HEK293 (cell line): ENCODE measurements at regions of chr22 and their contacts with region 1.

Region 1: GRCh38 chr22:24938741-24939341 is 7.7 kb downstream of the LHFPL7 start:
- H3K4me3 ChIP-seq: no peak overlapping the region
- H3K27ac ChIP-seq: no peak overlapping the region
- H3K4me1 ChIP-seq: no peaks in the 10 kb centered on the region
- CTCF ChIP-seq: peak; percentile 39; the same call in 1 of the 2 replicates

Region 2: GRCh38 chr22:24768537-24769374 is 170.1 kb before region 1 on chr22:
- CTCF ChIA-PET with region 1: interaction called, 35 read pairs
- POLR2A ChIA-PET with region 1: no interaction called
- H3K4me3 ChIP-seq: no peak overlapping the region
- H3K27ac ChIP-seq: no peak overlapping the region
- H3K4me1 ChIP-seq: no peaks in the 10 kb centered on the region
- CTCF ChIP-seq: no peak

Region 3: DNA sequence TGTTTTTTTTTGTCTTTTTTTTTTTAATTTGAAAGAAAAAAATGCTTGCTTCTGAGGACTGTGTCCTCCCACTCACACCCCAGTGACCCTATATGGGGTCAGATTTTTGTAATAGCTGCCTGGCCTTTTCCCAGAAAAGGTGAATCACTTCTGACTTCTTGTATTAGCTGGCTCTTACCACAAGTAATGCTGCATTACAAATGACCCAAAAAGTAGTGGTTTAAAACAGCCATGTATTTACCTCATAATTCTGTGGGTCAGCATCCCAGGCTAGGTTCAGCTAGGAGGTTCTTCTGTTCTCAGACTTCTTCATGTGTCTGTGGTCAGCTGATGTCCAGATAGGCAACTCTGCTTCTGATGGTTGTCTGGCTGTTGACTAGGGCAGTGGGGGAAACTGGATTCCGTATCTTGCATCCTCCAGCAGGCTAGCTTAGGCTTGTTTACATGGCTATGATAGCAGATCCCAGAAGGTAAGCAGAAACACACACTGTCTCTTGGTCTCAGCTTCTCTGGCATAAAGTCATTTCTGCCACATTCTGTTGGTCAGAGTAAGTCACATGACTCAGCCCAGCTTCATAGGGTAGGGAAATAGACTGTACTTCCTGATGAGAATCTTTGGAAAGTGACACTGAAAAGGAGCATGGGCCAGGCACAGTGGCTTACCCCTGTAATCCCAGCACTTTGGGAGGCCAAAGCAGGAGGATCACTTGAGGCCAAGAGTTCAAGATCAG is 11.8 kb before region 1 on chr22:
- CTCF ChIA-PET with region 1: interaction called, 13 read pairs
- POLR2A ChIA-PET with region 1: no interaction called
- H3K4me3 ChIP-seq: no peak overlapping the region
- H3K27ac ChIP-seq: no peak overlapping the region
- H3K4me1 ChIP-seq: no peaks in the 10 kb centered on the region
- CTCF ChIP-seq: no peak

Region 4: GRCh38 chr22:24996420-24996952 is 57.6 kb after region 1 on chr22:
- CTCF ChIA-PET with region 1: interaction called, 10 read pairs
- POLR2A ChIA-PET with region 1: no interaction called
- H3K4me3 ChIP-seq: no peak overlapping the region
- H3K27ac ChIP-seq: peak overlapping the region; percentile 1; the same call in 1 of the 2 replicates
- H3K4me1 ChIP-seq: peaks cover 13% of the 10 kb centered on the region
- CTCF ChIP-seq: no peak

Region 5: DNA sequence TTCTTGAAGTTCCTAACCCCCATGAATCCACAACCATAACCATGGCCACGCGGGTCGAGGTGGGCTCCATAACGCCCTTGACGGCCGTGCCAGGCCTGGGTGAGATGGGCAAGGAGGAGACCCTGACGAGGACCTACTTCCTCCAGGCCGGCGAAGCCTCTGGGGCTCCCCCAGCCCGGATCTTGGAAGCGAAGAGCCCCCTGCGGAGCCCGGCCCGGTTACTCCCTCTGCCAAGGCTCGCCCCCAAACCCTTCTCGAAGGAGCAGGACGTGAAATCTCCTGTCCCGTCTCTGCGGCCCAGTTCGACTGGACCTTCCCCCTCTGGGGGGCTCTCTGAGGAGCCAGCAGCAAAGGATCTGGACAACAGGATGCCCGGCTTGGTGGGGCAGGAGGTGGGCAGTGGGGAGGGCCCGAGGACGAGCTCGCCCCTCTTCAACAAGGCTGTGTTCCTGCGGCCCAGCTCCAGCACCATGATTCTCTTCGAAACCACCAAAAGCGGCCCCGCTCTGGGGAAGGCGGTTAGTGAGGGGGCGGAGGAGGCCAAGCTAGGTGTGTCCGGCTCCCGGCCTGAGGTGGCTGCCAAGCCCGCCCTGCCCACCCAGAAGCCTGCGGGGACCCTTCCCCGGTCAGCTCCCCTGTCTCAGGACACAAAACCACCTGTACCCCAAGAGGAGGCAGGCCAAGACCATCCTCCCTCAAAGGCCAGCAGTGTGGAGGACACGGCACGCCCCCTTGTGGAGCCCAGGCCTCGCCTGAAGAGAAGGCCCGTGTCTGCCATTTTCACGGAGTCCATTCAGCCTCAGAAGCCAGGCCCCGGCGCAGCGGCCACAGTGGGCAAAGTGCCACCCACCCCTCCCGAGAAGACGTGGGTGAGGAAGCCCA is 89.4 kb after region 1 on chr22:
- CTCF ChIA-PET with region 1: interaction called, 25 read pairs
- POLR2A ChIA-PET with region 1: no interaction called
- H3K4me3 ChIP-seq: no peak overlapping the region
- H3K27ac ChIP-seq: no peak overlapping the region
- H3K4me1 ChIP-seq: peaks cover 2% of the 10 kb centered on the region
- CTCF ChIP-seq: peak; percentile 48

Region 6: DNA sequence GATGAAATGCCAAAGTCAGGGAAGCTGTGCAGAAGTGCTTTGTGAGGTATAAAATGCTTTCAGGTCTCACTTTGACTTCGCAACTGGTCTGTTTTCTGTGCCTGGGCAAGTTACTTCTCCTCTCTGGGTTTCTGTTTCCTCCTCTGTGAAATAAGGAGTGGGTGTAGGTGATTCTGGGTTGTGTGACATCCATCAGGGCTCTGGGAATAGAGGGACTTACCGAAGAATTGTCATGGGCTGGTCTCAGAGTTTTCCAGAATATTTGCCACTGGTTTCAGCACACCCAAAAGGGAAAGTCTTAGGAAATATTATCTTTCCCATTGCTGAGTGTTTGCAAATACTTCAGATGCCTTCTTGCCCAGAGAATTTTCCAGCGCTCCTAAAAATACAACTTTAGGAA is 132.1 kb after region 1 on chr22:
- CTCF ChIA-PET with region 1: interaction called, 10 read pairs
- POLR2A ChIA-PET with region 1: no interaction called
- H3K4me3 ChIP-seq: no peak overlapping the region
- H3K27ac ChIP-seq: no peak overlapping the region
- H3K4me1 ChIP-seq: no peaks in the 10 kb centered on the region
- CTCF ChIP-seq: no peak

Region 7: DNA sequence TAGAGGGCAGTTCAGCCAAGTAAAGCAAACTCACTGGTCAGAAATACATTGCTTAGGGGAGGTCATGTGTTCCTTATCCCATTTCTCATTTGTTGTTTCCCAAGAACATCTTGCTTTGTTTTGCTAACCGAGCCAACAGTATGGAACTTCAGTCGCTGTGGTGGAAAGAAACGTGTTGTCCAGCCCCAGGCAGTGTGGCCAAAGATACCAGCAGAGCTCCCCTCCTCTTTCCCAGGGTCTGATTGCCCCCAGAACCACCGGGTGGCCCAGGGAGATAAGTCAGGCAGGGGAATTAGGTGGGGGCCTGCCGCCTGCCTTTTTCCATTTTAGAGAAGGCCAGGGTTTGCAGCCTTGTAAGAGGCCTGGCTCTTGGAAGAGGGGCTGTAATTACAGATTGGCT is 162.1 kb after region 1 on chr22:
- CTCF ChIA-PET with region 1: no interaction called
- POLR2A ChIA-PET with region 1: no interaction called
- H3K4me3 ChIP-seq: no peak overlapping the region
- H3K27ac ChIP-seq: no peak overlapping the region
- H3K4me1 ChIP-seq: no peaks in the 10 kb centered on the region
- CTCF ChIP-seq: no peak